ENCODE measurements at regions of chr15 and their contacts with region 1.

Region 1: DNA sequence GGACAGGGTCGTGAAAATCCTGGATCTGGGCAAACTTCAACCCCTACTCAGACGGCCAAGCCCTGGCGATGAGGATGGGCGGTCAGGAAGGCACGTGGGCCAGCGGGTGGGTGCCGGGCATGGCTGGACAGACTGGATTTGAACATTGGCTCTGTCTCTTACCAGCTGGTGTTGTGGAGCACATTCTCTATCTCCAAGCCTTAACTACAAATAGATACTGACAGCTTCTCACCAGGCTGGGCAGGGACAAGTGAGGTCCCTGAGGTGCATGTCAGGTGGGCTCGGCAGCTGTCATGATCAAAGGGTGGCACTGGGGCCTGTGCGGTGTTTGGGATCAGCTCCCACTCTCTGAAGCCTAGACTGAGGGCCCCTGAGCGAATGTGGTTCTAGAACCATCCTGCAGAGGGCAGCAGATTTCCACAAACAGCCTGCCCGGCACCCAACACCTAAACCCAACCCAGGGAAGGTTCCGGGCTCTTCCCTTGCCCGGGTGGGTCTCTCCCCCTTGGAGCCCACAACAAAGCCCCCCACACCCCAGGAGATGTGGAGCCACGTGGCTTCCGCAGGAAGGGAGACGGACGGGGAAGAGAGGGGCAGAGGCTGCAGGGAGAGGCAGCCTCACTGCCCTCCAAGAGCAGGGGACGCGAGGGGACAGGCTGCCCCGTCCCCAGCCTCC is 58.4 kb downstream of the RGMA start:
- DNase-seq: peak; percentile 82

Region 2: DNA sequence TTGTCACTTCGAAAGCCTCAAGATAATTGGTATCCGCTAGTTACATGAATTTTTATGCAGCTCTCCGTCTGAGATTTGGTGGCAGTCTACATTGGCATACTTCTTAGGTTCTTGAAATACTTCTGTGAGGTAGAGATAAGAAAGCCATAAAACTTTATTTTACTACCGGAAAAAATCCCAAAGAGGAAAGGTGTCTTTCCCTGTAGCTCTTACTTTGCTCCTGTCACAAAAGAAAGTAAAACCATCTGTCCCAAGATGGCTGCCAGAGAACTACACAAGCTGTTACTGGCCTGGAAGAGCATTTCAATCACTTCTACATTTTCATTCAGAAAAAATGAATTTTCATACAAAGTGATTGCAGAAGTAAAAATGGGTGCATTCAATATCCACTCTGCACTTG is 851.7 kb before region 1 on chr15:
- in situ Hi-C with region 1: no loop called
- DNase-seq: no peak

Region 3: DNA sequence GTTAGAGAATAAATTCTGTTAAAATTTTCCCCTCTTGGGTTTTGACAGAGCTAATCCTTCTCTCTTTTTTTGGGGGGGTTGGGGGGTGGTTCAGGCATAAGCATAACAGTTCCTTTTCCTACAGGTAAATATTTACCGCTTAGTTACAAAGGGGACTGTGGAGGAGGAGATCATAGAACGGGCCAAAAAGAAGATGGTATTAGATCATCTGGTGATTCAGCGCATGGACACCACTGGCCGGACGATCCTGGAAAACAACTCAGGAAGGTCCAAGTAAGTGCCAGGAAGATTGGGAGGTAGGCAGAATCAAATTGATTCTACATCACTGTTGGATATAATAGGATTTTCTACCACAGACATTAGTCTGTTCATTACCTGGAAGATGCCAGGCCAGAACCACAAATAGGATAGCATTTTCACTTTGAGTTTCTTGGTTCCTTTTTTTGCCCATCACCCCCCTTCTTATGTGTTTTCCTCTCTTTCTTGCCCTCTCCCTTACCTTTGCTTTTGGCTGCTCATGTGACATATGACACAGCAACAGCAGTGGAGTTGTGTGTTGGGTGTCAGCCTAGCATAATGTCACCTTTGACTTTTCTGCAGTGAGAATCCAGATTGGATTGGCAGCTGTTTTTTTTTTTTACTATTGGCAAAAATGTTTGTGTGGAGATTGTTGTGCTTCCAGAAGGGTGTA is 51.4 kb before region 1 on chr15:
- in situ Hi-C with region 1: no loop called
- DNase-seq: peak; percentile 11

Region 4: GRCh38 chr15:93543094-93543493 is 512.5 kb after region 1 on chr15:
- in situ Hi-C with region 1: no loop called
- DNase-seq: no peak

Region 5: GRCh38 chr15:94119923-94120775 is 1089.6 kb after region 1 on chr15:
- in situ Hi-C with region 1: loop called (anchors 25 kb)
- DNase-seq: peak; percentile 79